MCF 10A (cell line): ENCODE measurements at regions of chr2 and their contacts with region 1.

Region 1: GRCh38 chr2:45851613-45852304 is 200.3 kb downstream of the PRKCE start:
- DNase-seq: peak; percentile 91
- H3K4me3 Mint-ChIP-seq: no peak overlapping the region
- H3K27ac Mint-ChIP-seq: peak overlapping the region; percentile 76
- H3K4me1 Mint-ChIP-seq: peaks cover 45% of the 10 kb centered on the region
- H3K27me3 Mint-ChIP-seq: no peaks in the 10 kb centered on the region
- CTCF ChIP-seq: no peak

Region 2: DNA sequence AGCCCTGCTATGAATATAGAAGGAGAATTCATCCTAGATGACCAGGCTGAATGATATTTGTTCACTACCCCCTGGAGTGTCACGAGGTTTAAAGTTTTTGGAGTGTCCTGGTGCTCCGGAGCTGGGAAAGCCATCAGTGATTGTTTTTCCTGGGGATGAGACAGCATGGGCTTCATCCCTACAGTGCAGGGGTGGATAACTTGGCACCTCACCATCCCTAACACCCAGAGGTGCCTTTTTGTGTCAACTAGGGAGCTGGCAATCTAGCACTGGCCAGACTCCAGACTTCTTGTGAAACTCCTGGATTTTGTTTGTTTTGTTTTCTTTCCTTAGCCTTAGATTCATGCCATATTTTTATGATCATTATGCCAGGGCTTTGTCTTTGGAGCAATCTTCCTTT is 35.5 kb before region 1 on chr2:
- CTCF ChIA-PET with region 1: interaction called, 3 read pairs
- POLR2A ChIA-PET with region 1: interaction called, 11 read pairs
- intact Hi-C with region 1: no loop called
- DNase-seq: peak; percentile 97
- H3K4me3 Mint-ChIP-seq: no peak overlapping the region
- H3K27ac Mint-ChIP-seq: peak overlapping the region; percentile 93
- H3K4me1 Mint-ChIP-seq: peaks cover 71% of the 10 kb centered on the region
- H3K27me3 Mint-ChIP-seq: no peaks in the 10 kb centered on the region
- CTCF ChIP-seq: no peak

Region 3: GRCh38 chr2:45821564-45822271 is 30.0 kb before region 1 on chr2:
- CTCF ChIA-PET with region 1: interaction called, 15 read pairs
- POLR2A ChIA-PET with region 1: interaction called, 60 read pairs
- intact Hi-C with region 1: no loop called
- DNase-seq: peak; percentile 93
- H3K4me3 Mint-ChIP-seq: peak overlapping the region; percentile 50
- H3K27ac Mint-ChIP-seq: peak overlapping the region; percentile 49
- H3K4me1 Mint-ChIP-seq: peaks cover 77% of the 10 kb centered on the region
- H3K27me3 Mint-ChIP-seq: no peaks in the 10 kb centered on the region
- CTCF ChIP-seq: no peak